WTC11 (cell line): ENCODE measurements at regions of chr16 and their contacts with region 1.

Region 1: DNA sequence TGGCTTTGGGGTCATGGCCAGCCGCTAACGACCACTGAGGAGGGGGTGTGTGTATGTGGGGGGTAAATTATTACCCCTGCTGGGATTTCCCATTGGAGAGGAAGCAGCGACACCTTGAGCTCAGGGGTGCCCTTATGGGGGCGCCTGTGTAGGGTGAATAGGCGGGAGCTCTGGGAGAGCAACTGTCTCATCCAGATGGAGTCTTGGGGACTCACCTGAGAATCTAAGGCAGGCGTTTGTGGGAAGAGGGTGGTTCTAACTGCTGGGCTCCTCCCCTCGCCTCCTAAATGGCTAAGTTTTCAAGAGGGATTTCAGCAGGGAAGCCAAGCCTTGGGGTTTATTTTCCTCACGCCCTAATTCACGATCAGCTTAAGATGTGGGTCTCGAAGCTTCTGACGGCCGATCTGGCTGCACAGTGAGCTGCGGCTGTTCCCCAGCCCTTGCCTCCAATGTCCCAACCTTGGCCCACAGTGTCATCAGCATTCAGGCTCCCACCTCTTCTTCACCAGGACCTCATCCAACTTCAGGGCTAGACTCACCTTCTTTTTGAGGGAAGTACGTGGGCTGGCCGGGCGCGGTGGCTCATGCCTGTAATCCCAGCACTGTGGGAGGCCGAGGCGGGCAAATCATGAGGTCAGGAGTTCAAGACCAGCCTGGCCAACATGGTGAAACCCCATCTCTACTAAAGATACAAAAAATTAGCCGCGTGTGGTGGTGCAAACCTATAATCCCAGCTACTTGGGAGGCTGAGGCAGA is 136.9 kb upstream of the EEF2KMT start:
- DNase-seq: no peak
- ATAC-seq: peak; percentile 61
- H3K4me3 Mint-ChIP-seq: no peak overlapping the region
- H3K27ac Mint-ChIP-seq: no peak overlapping the region
- H3K4me1 Mint-ChIP-seq: peaks cover 19% of the 10 kb centered on the region
- H3K27me3 Mint-ChIP-seq: peaks cover 22% of the 10 kb centered on the region
- CTCF ChIP-seq: no peak

Region 2: DNA sequence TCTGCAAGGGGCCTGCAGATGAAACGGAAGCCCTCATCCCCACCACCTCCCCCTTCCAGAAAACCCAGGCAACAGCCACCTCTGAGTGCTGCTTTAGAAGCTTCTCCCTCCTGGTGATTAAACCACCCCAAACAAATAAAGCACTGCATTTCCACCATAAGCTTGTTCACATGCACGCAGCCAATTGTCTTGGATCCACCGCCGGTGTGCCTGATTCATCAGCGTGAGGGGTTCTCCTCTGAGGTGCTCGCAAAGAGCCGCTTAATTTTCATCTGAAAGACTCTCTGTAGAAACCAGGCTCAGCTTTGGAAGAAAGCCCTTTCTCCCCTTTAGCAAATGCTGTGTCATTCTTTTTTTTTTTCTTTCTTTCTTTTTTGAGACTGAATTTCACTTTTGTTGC is 18.3 kb after region 1 on chr16:
- CTCF ChIA-PET with region 1: interaction called, 12 read pairs
- POLR2A ChIA-PET with region 1: no interaction called
- DNase-seq: peak; percentile 26
- ATAC-seq: no peak
- H3K4me3 Mint-ChIP-seq: peak overlapping the region; percentile 48; the same call in 1 of the 2 replicates
- H3K27ac Mint-ChIP-seq: peak overlapping the region; percentile 90
- H3K4me1 Mint-ChIP-seq: peaks cover 36% of the 10 kb centered on the region
- H3K27me3 Mint-ChIP-seq: no peaks in the 10 kb centered on the region
- CTCF ChIP-seq: no peak